Activated naive CD4-positive, alpha-beta T cell treated with anti-CD3 and anti-CD28 coated beads for 36 hours (primary cell): ENCODE measurements at regions of chr1 and their contacts with region 1.

Region 1: GRCh38 chr1:211323156-211324063 is 3.2 kb upstream of the TRAF5 start:
- DNase-seq: peak; percentile 85
- H3K4me3 Mint-ChIP-seq: no peak overlapping the region
- H3K27ac Mint-ChIP-seq: no peak overlapping the region
- H3K4me1 Mint-ChIP-seq: peaks cover 58% of the 10 kb centered on the region
- H3K27me3 Mint-ChIP-seq: no peaks in the 10 kb centered on the region

Region 2: GRCh38 chr1:211174375-211174774 is 149.0 kb before region 1 on chr1:
- CTCF ChIA-PET with region 1: no interaction called
- intact Hi-C with region 1: no loop called
- DNase-seq: no peak
- H3K4me3 Mint-ChIP-seq: no peak overlapping the region
- H3K27ac Mint-ChIP-seq: no peak overlapping the region
- H3K4me1 Mint-ChIP-seq: no peaks in the 10 kb centered on the region
- H3K27me3 Mint-ChIP-seq: peaks cover 7% of the 10 kb centered on the region

Region 3: GRCh38 chr1:211281320-211282022 is 41.9 kb before region 1 on chr1:
- CTCF ChIA-PET with region 1: interaction called, 6 read pairs
- intact Hi-C with region 1: loop called (anchors 1 kb)
- DNase-seq: no peak
- H3K4me3 Mint-ChIP-seq: no peak overlapping the region
- H3K27ac Mint-ChIP-seq: no peak overlapping the region
- H3K4me1 Mint-ChIP-seq: peaks cover 2% of the 10 kb centered on the region
- H3K27me3 Mint-ChIP-seq: no peaks in the 10 kb centered on the region

Region 4: DNA sequence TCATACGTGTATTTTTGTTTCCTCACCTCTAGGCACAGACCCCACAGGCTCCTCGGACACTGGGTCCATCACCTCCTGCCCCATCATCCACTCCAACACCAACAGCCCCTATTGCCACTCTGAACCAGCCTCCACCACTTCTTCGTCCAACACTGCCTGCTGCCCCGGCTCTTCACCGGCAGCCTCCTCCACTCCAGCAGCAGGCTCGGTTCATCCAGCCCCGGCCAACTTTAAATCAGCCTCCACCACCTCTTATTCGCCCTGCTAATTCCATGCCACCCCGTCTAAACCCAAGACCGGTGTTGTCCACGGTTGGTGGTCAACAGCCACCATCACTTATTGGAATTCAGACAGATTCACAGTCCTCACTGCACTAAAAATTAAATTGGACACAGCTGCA is 10.0 kb before region 1 on chr1:
- CTCF ChIA-PET with region 1: interaction called, 11 read pairs
- intact Hi-C with region 1: no loop called
- DNase-seq: no peak
- H3K4me3 Mint-ChIP-seq: no peak overlapping the region
- H3K27ac Mint-ChIP-seq: no peak overlapping the region
- H3K4me1 Mint-ChIP-seq: peaks cover 11% of the 10 kb centered on the region
- H3K27me3 Mint-ChIP-seq: no peaks in the 10 kb centered on the region

Region 5: DNA sequence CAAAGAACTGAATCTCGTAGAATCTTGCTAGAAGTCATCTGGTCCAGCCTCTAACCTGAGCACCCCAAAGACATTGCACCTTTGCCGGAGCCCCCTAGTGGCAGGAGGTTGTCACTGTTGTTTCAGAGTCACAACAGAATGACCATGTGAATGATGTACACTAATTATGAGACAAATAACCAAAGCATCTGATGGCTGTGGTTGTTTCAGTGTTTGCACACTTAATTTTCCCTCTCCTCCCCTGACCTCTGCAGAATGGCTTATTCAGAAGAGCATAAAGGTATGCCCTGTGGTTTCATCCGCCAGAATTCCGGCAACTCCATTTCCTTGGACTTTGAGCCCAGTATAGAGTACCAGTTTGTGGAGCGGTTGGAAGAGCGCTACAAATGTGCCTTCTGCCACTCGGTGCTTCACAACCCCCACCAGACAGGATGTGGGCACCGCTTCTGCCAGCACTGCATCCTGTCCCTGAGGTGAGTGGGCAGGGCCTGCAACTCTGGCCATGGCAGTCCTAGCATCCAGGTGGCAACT is 29.6 kb after region 1 on chr1:
- CTCF ChIA-PET with region 1: interaction called, 11 read pairs
- intact Hi-C with region 1: loop called (anchors 2 kb)
- DNase-seq: peak; percentile 70
- H3K4me3 Mint-ChIP-seq: peak overlapping the region; percentile 15
- H3K27ac Mint-ChIP-seq: peak overlapping the region; percentile 83
- H3K4me1 Mint-ChIP-seq: peaks cover 62% of the 10 kb centered on the region
- H3K27me3 Mint-ChIP-seq: no peaks in the 10 kb centered on the region

Region 6: GRCh38 chr1:211469938-211470529 is 146.6 kb after region 1 on chr1:
- CTCF ChIA-PET with region 1: interaction called, 13 read pairs
- intact Hi-C with region 1: no loop called
- DNase-seq: peak; percentile 54
- H3K4me3 Mint-ChIP-seq: no peak overlapping the region
- H3K27ac Mint-ChIP-seq: no peak overlapping the region
- H3K4me1 Mint-ChIP-seq: no peaks in the 10 kb centered on the region
- H3K27me3 Mint-ChIP-seq: peaks cover 2% of the 10 kb centered on the region

Region 7: DNA sequence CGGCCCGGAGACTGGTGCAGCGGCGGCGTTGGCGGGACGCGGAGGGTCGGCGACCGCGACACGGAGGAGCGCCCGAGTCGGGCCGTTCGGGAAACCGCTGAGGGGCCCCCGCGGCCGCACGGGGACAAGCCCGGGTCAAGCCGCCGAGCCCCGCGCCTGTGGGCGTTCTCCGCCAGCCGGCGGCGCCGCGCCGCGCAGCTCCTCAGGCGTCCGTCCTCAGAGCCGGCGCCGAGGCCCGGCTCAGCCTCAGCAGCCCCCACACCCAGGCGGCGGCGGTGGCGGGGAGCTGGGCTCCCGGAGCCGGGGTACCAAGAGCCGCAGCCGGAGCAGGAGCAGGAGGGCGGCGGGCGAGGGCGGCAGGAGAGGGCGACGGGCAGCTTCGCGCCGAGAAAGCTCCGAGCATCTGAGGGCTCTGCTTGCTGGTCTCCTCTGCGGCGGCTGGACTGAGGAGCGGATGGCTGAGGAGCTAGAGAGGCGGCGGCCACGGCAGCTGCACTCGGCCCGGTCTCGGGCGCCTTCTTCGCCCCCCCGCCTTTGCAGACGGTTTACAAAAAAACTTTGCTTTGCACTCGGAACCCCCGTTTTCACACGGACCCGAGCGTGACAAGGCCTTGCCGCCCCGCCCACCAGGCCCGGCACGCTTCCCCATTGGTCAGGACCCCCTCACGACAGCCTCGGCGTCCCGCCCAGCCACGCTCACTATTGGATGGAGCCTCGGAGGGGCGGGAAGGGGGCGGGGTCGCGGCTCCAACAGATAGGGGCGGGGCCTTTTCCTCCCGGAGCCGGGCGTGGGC is 255.4 kb after region 1 on chr1 and contains the start of gene SLC30A1:
- CTCF ChIA-PET with region 1: no interaction called
- intact Hi-C with region 1: loop called (anchors 2 kb)
- DNase-seq: peak; percentile 99
- H3K4me3 Mint-ChIP-seq: peak within 1 kb of the TSS; percentile 90
- H3K27ac Mint-ChIP-seq: peak within 1 kb of the TSS; percentile 75
- H3K4me1 Mint-ChIP-seq: peaks cover 31% of the 10 kb centered on the region
- H3K27me3 Mint-ChIP-seq: no peaks in the 10 kb centered on the region
- total RNA-seq, gene SLC30A1: 4.4 to 4.7 TPM

Region 8: DNA sequence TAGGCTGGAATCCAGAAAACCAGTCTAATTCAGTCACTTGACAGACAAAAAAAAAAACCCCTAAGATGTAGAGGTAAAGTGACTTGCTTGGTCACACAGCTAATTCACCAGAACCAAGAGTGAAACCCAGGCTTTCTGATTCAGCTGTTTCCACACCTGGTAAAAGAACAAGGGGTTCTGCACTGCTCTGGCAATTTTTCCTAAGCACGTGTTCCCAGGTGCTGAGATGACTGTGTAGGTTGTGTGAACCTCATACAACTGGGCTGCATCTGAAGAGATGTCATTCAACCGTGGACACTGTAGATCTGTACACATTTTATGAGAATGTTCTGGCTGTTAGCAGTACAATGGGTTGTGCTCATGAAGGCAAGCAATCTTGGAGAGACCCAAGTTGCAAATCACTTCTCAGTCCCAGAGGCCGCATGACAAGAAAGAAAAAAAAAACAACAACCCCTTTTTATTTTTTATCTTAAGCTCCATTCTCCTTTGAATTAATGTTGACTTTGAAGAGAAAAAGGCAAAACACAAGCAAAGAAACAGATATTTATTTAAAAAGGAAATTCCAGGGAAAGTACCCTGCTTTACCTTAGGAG is 616.6 kb after region 1 on chr1:
- CTCF ChIA-PET with region 1: no interaction called
- intact Hi-C with region 1: loop called (anchors 10 kb)
- DNase-seq: peak; percentile 86
- H3K4me3 Mint-ChIP-seq: no peak overlapping the region
- H3K27ac Mint-ChIP-seq: no peak overlapping the region
- H3K4me1 Mint-ChIP-seq: peaks cover 44% of the 10 kb centered on the region
- H3K27me3 Mint-ChIP-seq: no peaks in the 10 kb centered on the region